Esophagus muscularis mucosa (tissue), 4 donors: ENCODE measurements at regions of chr3 and their contacts with region 1.

Region 1: GRCh38 chr3:16600780-16601539 is 4.3 kb downstream of the DAZL start:
- DNase-seq: no peak
- H3K4me3 ChIP-seq: no peak overlapping the region
- H3K27ac ChIP-seq: no peak overlapping the region
- H3K4me1 ChIP-seq: peaks cover 0 to 6% (median 2%) of the 10 kb centered on the region in 4 donors
- H3K27me3 ChIP-seq: no peaks in the 10 kb centered on the region
- CTCF ChIP-seq: peak; percentile 72 to 85 (median 84)
- EP300 ChIP-seq: no peak
- POLR2A ChIP-seq: no peak

Region 2: DNA sequence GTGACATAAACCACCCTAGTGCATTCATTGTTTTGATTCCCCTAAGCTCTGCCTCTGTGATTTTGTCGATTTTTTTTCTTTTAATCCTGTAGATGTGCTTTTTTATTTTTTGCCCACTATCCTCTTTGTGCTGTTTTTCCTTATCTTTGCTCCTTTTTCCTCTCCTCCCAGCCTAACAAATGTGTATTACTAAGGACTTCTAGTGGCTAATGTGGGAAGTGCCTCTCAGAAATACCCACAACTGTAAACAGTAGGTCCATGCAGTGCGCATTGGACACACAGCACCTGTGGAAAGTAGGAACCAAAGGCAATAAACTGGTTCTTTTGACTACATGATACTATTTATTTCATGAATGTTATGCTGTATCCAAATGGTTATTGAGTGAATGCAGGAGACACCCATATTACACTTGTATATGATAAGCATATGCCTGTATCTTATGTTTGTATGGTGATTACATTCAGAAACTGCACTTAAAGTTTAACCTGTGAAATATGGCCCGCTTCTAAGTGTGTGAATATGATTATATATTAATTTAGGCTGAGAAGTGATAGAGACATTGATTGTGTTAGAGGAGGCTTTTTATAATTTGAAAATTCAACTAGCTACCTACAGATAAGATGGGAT is 431.6 kb after region 1 on chr3:
- intact Hi-C with region 1: loop called (anchors 5 kb)
- DNase-seq: no peak
- H3K4me3 ChIP-seq: no peak overlapping the region
- H3K27ac ChIP-seq: no peak overlapping the region
- H3K4me1 ChIP-seq: peaks cover 0 to 4% (median 0%) of the 10 kb centered on the region in 4 donors
- H3K27me3 ChIP-seq: no peaks in the 10 kb centered on the region
- CTCF ChIP-seq: peak; percentile 33 to 45 (median 39)
- EP300 ChIP-seq: no peak
- POLR2A ChIP-seq: no peak

Region 3: GRCh38 chr3:17233398-17233800 is 632.4 kb after region 1 on chr3:
- intact Hi-C with region 1: loop called (anchors 5 kb)
- DNase-seq: no peak
- H3K4me3 ChIP-seq: no peak overlapping the region
- H3K27ac ChIP-seq: no peak overlapping the region
- H3K4me1 ChIP-seq: no peaks in the 10 kb centered on the region
- H3K27me3 ChIP-seq: no peaks in the 10 kb centered on the region
- CTCF ChIP-seq: peak; percentile 51 to 59 (median 56)
- EP300 ChIP-seq: no peak
- POLR2A ChIP-seq: no peak

Region 4: GRCh38 chr3:17407576-17407975 is 806.6 kb after region 1 on chr3:
- intact Hi-C with region 1: loop called (anchors 10 kb)
- DNase-seq: no peak
- H3K4me3 ChIP-seq: no peak overlapping the region
- H3K27ac ChIP-seq: no peak overlapping the region
- H3K4me1 ChIP-seq: no peaks in the 10 kb centered on the region
- H3K27me3 ChIP-seq: no peaks in the 10 kb centered on the region
- CTCF ChIP-seq: no peak
- EP300 ChIP-seq: no peak
- POLR2A ChIP-seq: no peak

Region 5: DNA sequence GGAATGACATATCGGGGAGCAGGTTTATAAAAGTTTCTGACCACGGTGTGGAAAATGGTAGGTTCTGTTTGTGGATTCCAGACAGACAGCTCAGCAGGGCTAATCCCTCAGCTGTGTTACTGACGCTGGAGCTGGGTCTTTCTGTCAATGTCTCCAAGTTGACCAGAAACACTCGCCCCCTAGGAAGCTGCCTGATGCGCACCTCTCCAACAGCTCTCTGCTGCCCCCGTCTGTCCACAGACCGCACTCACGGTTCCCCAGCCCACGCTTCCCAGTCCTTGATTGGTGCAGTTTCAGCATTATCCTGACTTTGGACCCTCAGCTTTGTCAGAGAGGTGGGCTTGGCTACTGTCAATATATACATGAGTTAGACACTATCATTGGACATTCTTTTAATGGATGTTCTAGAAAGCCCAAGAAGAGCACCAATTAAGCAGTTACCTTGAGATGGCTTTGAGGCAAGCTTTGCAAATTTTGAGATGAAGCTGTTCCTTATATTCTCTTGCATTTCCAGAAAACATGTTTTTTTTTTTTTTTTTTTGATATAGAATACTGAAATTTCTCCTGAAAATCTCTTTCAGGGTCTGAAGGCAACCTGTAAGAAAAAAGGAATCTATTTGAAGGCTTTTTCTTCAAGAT is 1240.3 kb after region 1 on chr3:
- intact Hi-C with region 1: loop called (anchors 5 kb)
- DNase-seq: no peak
- H3K4me3 ChIP-seq: no peak overlapping the region
- H3K27ac ChIP-seq: no peak overlapping the region
- H3K4me1 ChIP-seq: no peaks in the 10 kb centered on the region
- H3K27me3 ChIP-seq: no peaks in the 10 kb centered on the region
- CTCF ChIP-seq: peak; percentile 83 to 97 (median 85)
- EP300 ChIP-seq: no peak
- POLR2A ChIP-seq: no peak